Heart left ventricle (tissue), 16 donors: ENCODE measurements at regions of chr9 and their contacts with region 1.

Region 1: DNA sequence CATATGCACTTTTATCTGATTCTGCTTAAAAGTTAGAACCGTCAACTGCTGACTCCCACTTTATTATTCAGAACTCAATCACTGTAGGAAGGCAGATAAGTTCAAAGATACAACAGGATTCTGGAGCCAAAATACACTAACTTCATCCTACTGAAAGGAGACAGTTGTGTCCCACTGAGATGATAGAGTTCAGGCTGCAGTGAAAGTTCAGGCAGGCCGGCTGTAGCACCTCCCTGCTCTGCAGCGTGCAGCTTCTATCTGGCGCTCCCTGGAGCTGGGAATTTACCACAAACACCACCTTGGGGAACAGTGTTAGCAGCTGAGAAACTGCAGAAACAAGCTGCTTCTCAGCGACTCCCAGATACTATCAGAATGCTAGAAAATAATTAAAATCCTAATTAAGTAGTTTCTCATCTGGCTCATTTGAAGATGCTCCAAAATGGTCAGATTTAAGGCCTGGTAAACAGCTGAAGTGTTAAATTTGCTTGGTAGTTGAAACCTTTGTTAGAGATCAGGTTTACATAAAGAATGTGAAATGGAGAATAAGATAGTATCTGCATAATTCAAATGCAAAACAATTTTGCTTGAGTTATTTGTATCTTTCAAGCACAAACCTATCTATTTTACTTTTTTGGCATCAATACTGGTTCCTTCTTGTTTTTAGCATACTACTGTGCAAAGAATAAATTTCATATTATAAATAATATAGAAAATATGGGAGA is 52.3 kb upstream of the CNTLN start:
- DNase-seq: no peak
- ATAC-seq: peak in 1 of 4 donors; percentile 55
- H3K4me3 ChIP-seq: no peak overlapping the region
- H3K27ac ChIP-seq: no peak overlapping the region
- H3K4me1 ChIP-seq: peaks cover 0 to 7% (median 0%) of the 10 kb centered on the region in 12 donors
- H3K27me3 ChIP-seq: no peaks in the 10 kb centered on the region
- CTCF ChIP-seq: no peak
- POLR2A ChIP-seq: no peak

Region 2: DNA sequence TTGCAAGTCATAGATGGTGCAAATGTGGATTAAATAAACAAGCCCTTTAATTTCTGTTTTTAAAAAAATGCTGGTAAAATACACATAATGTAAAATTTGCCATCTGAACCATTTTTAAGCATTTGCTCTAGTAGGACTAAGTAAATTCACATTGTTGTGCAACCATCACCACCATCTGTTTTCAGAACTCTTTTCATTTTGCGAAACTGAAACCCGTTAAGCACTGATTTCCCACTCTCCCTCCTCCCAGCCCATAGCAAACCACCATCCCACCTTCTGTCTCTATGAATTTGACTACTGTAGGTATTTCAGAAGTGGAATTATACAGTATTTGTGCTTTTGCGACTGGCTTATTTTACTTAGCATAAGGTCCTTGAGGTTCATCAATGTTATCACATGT is 51.0 kb before region 1 on chr9:
- intact Hi-C with region 1: loop called in 1 of 10 experiments (anchors 5 kb)
- DNase-seq: no peak
- ATAC-seq: no peak
- H3K4me3 ChIP-seq: no peak overlapping the region
- H3K27ac ChIP-seq: no peak overlapping the region
- H3K4me1 ChIP-seq: no peaks in the 10 kb centered on the region
- H3K27me3 ChIP-seq: no peaks in the 10 kb centered on the region
- CTCF ChIP-seq: no peak
- POLR2A ChIP-seq: no peak